ENCODE measurements at regions of chr2 and their contacts with region 1.

Region 1: GRCh38 chr2:55084641-55085040 is 34.4 kb upstream of the RTN4 start:
- DNase-seq: no peak
- ATAC-seq: no peak
- H3K4me3 ChIP-seq: no peak overlapping the region
- H3K27ac ChIP-seq: no peak overlapping the region
- H3K4me1 ChIP-seq: no peaks in the 10 kb centered on the region
- H3K27me3 ChIP-seq: no peaks in the 10 kb centered on the region
- CTCF ChIP-seq: no peak

Region 2: GRCh38 chr2:55014962-55015939 is 69.4 kb before region 1 on chr2:
- CTCF ChIA-PET with region 1: no interaction called
- POLR2A ChIA-PET with region 1: no interaction called
- in situ Hi-C with region 1: no loop called
- intact Hi-C with region 1: no loop called
- DNase-seq: no peak
- ATAC-seq: peak; percentile 71
- H3K4me3 ChIP-seq: no peak overlapping the region
- H3K27ac ChIP-seq: peak overlapping the region; percentile 91
- H3K4me1 ChIP-seq: peaks cover 74% of the 10 kb centered on the region
- H3K27me3 ChIP-seq: no peaks in the 10 kb centered on the region
- CTCF ChIP-seq: peak; percentile 79

Region 3: GRCh38 chr2:55223958-55224760 is 139.5 kb after region 1 on chr2:
- CTCF ChIA-PET with region 1: no interaction called
- POLR2A ChIA-PET with region 1: interaction called, 12 read pairs
- in situ Hi-C with region 1: no loop called
- intact Hi-C with region 1: no loop called
- DNase-seq: no peak
- ATAC-seq: peak; percentile 55
- H3K4me3 ChIP-seq: peak overlapping the region; percentile 53 to 63; a peak in 3 of 4 replicates
- H3K27ac ChIP-seq: peak overlapping the region; percentile 84
- H3K4me1 ChIP-seq: peaks cover 19% of the 10 kb centered on the region
- H3K27me3 ChIP-seq: no peaks in the 10 kb centered on the region
- CTCF ChIP-seq: no peak